ENCODE measurements at regions of chr20 and their contacts with region 1.

Region 1: DNA sequence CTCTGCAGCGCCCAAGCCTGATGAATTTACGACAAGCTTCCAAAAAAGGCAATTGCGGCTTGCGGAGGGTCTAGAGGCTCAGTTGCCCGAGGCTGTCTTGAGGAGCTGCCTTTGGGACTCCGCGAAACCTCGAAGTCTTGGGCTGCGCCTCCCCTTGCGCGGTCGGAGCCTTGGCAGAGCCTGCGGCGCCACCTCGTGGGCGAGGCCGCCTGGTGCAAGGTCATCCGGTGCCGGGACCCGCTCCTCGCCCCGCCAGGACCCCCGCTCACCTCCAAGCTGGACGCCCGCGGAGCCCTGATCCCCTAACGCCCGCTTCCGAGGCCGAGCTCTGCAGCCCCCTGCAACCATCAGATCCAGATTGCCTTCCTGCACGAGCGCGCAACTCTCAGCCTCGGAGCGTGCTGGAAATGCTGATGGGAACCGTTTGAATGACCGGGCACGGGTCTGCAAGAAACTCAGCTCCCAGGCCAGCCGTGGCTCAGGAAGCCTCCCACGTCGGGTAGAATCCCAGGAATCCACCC is 14.9 kb upstream of the FAM210B start:
- DNase-seq: peak; percentile 76 to 83 (median 82)
- ATAC-seq: peak; percentile 100
- H3K4me3 ChIP-seq: no peak overlapping the region
- H3K27ac ChIP-seq: no peak overlapping the region
- H3K4me1 ChIP-seq: peaks cover 0 to 6% of the 10 kb centered on the region in 2 experiments; a peak in 2 of 5 replicates
- H3K27me3 ChIP-seq: peaks cover 3 to 20% of the 10 kb centered on the region in 2 experiments; a peak in 2 of 5 replicates
- CTCF ChIP-seq: peak; percentile 84 to 88 (median 85)
- EP300 ChIP-seq: no peak
- POLR2A ChIP-seq: no peak
- RAD21 ChIP-seq: peak; percentile 72 to 90

Region 2: GRCh38 chr20:54649511-54649962 is 1694.4 kb before region 1 on chr20:
- CTCF ChIA-PET with region 1: interaction called, 5 read pairs
- POLR2A ChIA-PET with region 1: no interaction called
- in situ Hi-C with region 1: no loop called
- intact Hi-C with region 1: loop called (anchors 2 kb)
- DNase-seq: peak; percentile 53 to 78 (median 69)
- ATAC-seq: peak; percentile 86
- H3K4me3 ChIP-seq: no peak overlapping the region
- H3K27ac ChIP-seq: no peak overlapping the region
- H3K4me1 ChIP-seq: no peaks in the 10 kb centered on the region
- H3K27me3 ChIP-seq: no peaks in the 10 kb centered on the region
- CTCF ChIP-seq: peak; percentile 58 to 74 (median 72)
- EP300 ChIP-seq: no peak
- POLR2A ChIP-seq: no peak
- RAD21 ChIP-seq: peak; percentile 47 to 73

Region 3: GRCh38 chr20:54680872-54681619 is 1662.9 kb before region 1 on chr20:
- CTCF ChIA-PET with region 1: interaction called, 5 read pairs
- POLR2A ChIA-PET with region 1: no interaction called
- in situ Hi-C with region 1: loop called (anchors 10 kb)
- intact Hi-C with region 1: no loop called
- DNase-seq: peak; percentile 11 to 61 (median 14)
- ATAC-seq: peak; percentile 64
- H3K4me3 ChIP-seq: no peak overlapping the region
- H3K27ac ChIP-seq: no peak overlapping the region
- H3K4me1 ChIP-seq: no peaks in the 10 kb centered on the region
- H3K27me3 ChIP-seq: no peaks in the 10 kb centered on the region
- CTCF ChIP-seq: peak; percentile 47 to 67 (median 49); a peak in 5 of 6 replicates
- EP300 ChIP-seq: no peak
- POLR2A ChIP-seq: no peak
- RAD21 ChIP-seq: peak in 1 of 2 experiments; percentile 53; a peak in 3 of 4 replicates

Region 4: GRCh38 chr20:56247948-56248782 is 95.8 kb before region 1 on chr20 and contains the start of gene MC3R:
- CTCF ChIA-PET with region 1: interaction called, 4 read pairs
- POLR2A ChIA-PET with region 1: no interaction called
- in situ Hi-C with region 1: loop called (anchors 10 kb)
- intact Hi-C with region 1: loop called (anchors 2 kb)
- DNase-seq: peak; percentile 42 to 61 (median 47)
- ATAC-seq: peak; percentile 94
- H3K4me3 ChIP-seq: no peak within 1 kb of the TSS
- H3K27ac ChIP-seq: no peak within 1 kb of the TSS
- H3K4me1 ChIP-seq: no peaks in the 10 kb centered on the region; a peak in 1 of 5 replicates
- H3K27me3 ChIP-seq: peaks cover 0 to 7% of the 10 kb centered on the region in 2 experiments; a peak in 2 of 5 replicates
- CTCF ChIP-seq: peak; percentile 64 to 79 (median 64)
- EP300 ChIP-seq: no peak
- POLR2A ChIP-seq: no peak
- RAD21 ChIP-seq: peak in 1 of 2 experiments; percentile 60; a peak in 2 of 4 replicates
- polyA plus RNA-seq, gene MC3R: not detected

Region 5: GRCh38 chr20:56574531-56575142 is 230.7 kb after region 1 on chr20:
- CTCF ChIA-PET with region 1: no interaction called
- POLR2A ChIA-PET with region 1: no interaction called
- in situ Hi-C with region 1: no loop called
- intact Hi-C with region 1: loop called (anchors 5 kb)
- DNase-seq: peak in 2 of 4 experiments; percentile 6 to 17
- ATAC-seq: peak; percentile 44; the same call in 1 of the 3 replicates
- H3K4me3 ChIP-seq: no peak overlapping the region
- H3K27ac ChIP-seq: no peak overlapping the region
- H3K4me1 ChIP-seq: no peaks in the 10 kb centered on the region; a peak in 1 of 5 replicates
- H3K27me3 ChIP-seq: peaks cover 2 to 38% of the 10 kb centered on the region in 2 experiments; a peak in 3 of 5 replicates
- CTCF ChIP-seq: no peak
- EP300 ChIP-seq: no peak
- POLR2A ChIP-seq: no peak
- RAD21 ChIP-seq: no peak